PC-3 (cell line): ENCODE measurements at regions of chr5 and their contacts with region 1.

Region 1: DNA sequence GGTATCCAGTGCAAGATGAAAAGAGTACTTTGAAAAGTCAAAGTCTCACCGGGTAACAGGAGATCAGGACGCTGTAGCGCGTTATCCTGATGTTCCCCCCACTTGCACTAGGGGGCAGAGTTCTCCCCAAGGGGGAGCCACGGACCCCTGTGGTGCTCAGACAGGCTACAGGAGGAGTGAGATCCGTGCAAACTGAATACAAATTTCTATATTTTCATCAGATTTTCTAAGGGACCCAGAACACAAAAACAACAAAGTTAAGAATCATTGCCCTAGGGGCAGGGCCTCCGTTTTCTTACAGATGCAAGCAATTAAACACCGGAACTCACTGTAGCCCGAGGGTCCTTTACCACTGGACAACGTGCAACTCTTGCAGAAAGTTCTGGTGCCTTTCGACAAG is 2.0 kb downstream of the MYO10 start:
- DNase-seq: peak; percentile 96
- ATAC-seq: peak; percentile 51
- H3K4me3 ChIP-seq: peak overlapping the region; percentile 76
- H3K27ac ChIP-seq: peak overlapping the region; percentile 62; the same call in 1 of the 2 replicates
- H3K4me1 ChIP-seq: peaks cover 35% of the 10 kb centered on the region
- H3K27me3 ChIP-seq: no peaks in the 10 kb centered on the region
- CTCF ChIP-seq: peak; percentile 99

Region 2: GRCh38 chr5:16791036-16791705 is 143.0 kb before region 1 on chr5:
- CTCF ChIA-PET with region 1: interaction called, 7 read pairs
- POLR2A ChIA-PET with region 1: interaction called, 7 read pairs
- intact Hi-C with region 1: loop called (anchors 1 kb)
- DNase-seq: peak; percentile 95
- ATAC-seq: peak; percentile 40
- H3K4me3 ChIP-seq: no peak overlapping the region
- H3K27ac ChIP-seq: no peak overlapping the region
- H3K4me1 ChIP-seq: no peaks in the 10 kb centered on the region
- H3K27me3 ChIP-seq: no peaks in the 10 kb centered on the region
- CTCF ChIP-seq: peak; percentile 97

Region 3: GRCh38 chr5:16815432-16815831 is 118.7 kb before region 1 on chr5:
- CTCF ChIA-PET with region 1: interaction called, 17 read pairs
- POLR2A ChIA-PET with region 1: no interaction called
- intact Hi-C with region 1: loop called (anchors 2 kb)
- DNase-seq: peak; percentile 72
- ATAC-seq: no peak
- H3K4me3 ChIP-seq: no peak overlapping the region
- H3K27ac ChIP-seq: no peak overlapping the region
- H3K4me1 ChIP-seq: peaks cover 17% of the 10 kb centered on the region
- H3K27me3 ChIP-seq: no peaks in the 10 kb centered on the region
- CTCF ChIP-seq: no peak

Region 4: DNA sequence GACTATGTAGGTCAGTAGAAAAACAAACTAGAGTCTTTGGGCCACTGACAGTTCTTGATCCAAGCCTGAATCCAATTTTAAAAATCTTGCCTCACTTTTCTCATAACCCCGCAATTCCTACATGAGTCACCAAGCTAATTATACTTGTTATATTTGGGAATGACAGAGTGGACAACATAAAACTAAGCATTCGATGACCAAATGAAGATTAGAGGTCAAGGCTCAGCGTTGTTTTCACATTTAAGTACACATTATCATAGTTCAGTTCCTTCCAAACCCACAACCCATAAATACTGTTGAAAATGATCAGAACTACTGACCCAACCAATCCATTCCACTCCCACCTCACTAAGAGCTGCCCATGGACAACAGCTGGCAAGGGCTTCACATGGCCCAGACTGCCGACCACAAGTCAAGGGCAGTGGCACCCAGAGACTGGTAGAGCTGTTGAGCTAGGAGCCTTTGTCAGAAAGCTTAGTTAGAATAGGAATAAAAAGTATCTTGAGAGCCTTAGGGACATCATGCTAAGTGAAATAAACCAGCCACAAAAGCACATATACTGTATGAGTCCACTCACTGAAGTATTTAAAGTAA is 62.3 kb before region 1 on chr5:
- CTCF ChIA-PET with region 1: interaction called, 3 read pairs
- POLR2A ChIA-PET with region 1: no interaction called
- intact Hi-C with region 1: loop called (anchors 10 kb)
- DNase-seq: peak; percentile 80
- ATAC-seq: peak; percentile 40
- H3K4me3 ChIP-seq: no peak overlapping the region
- H3K27ac ChIP-seq: peak overlapping the region; percentile 79
- H3K4me1 ChIP-seq: peaks cover 24% of the 10 kb centered on the region
- H3K27me3 ChIP-seq: no peaks in the 10 kb centered on the region
- CTCF ChIP-seq: no peak

Region 5: DNA sequence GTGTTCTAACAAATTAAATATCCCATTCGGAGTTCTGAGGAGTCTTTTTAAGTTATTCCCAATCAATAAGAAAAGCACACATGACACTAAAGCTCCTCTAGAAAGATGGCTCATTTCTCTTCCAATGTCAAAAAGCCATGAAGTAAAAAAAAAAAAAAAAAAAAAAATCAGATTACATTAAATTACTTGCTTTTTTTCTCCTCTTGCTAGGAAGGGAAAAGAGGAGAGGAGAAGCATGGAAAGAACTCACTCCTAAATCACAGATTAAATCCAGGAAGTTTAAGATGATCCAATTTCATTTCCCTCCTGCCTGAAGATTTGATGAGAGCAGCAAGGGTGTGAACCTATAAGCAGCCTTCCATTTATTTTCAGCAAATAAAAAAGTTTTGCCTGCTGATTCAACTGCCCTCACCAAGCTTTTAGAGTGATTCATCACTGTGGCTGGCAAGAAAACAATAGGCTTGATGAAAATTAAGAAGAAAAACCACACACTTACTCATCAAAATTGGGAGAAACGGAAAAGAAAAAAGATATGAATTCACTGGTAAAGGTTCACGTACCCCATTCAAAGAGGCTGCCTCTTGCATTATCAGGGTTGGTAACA is 17.8 kb before region 1 on chr5:
- CTCF ChIA-PET with region 1: no interaction called
- POLR2A ChIA-PET with region 1: no interaction called
- intact Hi-C with region 1: no loop called
- DNase-seq: peak; percentile 100
- ATAC-seq: peak; percentile 92
- H3K4me3 ChIP-seq: peak overlapping the region; percentile 43
- H3K27ac ChIP-seq: peak overlapping the region; percentile 74
- H3K4me1 ChIP-seq: peaks cover 53% of the 10 kb centered on the region
- H3K27me3 ChIP-seq: no peaks in the 10 kb centered on the region
- CTCF ChIP-seq: no peak

Region 6: DNA sequence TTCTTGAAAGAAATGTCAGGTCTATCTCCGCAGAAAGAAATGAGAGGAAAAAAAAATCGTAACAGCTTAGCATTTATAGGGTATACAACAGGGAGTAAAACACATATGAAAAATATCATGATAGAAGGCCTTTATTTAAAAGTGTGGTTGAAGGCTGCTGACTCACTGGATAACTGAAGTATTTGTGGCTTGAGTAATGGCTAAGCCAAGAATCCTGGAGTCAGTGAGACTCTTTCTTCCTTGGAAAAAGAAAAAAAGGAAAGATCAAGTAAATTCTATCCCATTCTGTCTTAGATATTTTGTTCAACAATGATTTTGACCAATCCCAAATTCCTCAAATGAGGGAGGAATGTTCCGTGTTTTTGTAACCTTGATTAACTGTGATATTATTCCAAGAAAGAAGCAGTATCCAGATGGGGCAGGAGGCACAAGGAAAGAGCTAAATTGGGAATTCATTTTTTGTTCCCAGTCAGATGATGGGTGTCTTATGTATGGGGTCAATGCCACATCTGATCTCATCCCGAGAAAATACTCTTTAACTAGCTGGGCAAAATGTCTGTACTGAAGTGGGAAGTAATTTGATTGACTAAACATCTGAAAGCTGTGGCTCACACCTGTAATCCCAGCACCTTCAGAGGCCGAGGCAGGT is 66.3 kb after region 1 on chr5:
- CTCF ChIA-PET with region 1: no interaction called
- POLR2A ChIA-PET with region 1: interaction called, 13 read pairs
- intact Hi-C with region 1: loop called (anchors 1 kb)
- DNase-seq: peak; percentile 99
- ATAC-seq: peak; percentile 99
- H3K4me3 ChIP-seq: peak overlapping the region; percentile 9; the same call in 1 of the 2 replicates
- H3K27ac ChIP-seq: peak overlapping the region; percentile 84
- H3K4me1 ChIP-seq: peaks cover 21% of the 10 kb centered on the region
- H3K27me3 ChIP-seq: no peaks in the 10 kb centered on the region
- CTCF ChIP-seq: no peak

Region 7: GRCh38 chr5:17105744-17106418 is 171.8 kb after region 1 on chr5:
- CTCF ChIA-PET with region 1: no interaction called
- POLR2A ChIA-PET with region 1: interaction called, 10 read pairs
- intact Hi-C with region 1: no loop called
- DNase-seq: peak; percentile 46
- ATAC-seq: no peak
- H3K4me3 ChIP-seq: no peak overlapping the region
- H3K27ac ChIP-seq: no peak overlapping the region
- H3K4me1 ChIP-seq: 0 out of 2 replicates have a peak, but pooled peaks cover 4% of the 10 kb centered on the region
- H3K27me3 ChIP-seq: no peaks in the 10 kb centered on the region
- CTCF ChIP-seq: no peak

Region 8: GRCh38 chr5:17189381-17190036 is 255.4 kb after region 1 on chr5:
- CTCF ChIA-PET with region 1: interaction called, 6 read pairs
- POLR2A ChIA-PET with region 1: interaction called, 4 read pairs
- intact Hi-C with region 1: loop called (anchors 1 kb)
- DNase-seq: peak; percentile 99
- ATAC-seq: peak; percentile 45
- H3K4me3 ChIP-seq: no peak overlapping the region
- H3K27ac ChIP-seq: peak overlapping the region; percentile 1; the same call in 1 of the 2 replicates
- H3K4me1 ChIP-seq: peaks cover 53% of the 10 kb centered on the region
- H3K27me3 ChIP-seq: no peaks in the 10 kb centered on the region
- CTCF ChIP-seq: peak; percentile 100